ENCODE measurements at regions of chr5 and their contacts with region 1.

Region 1: GRCh38 chr5:111278845-111279504 is 54.8 kb downstream of the CAMK4 start:
- DNase-seq: peak; percentile 69
- H3K4me3 ChIP-seq: no peak overlapping the region
- H3K27ac ChIP-seq: no peak overlapping the region
- H3K4me1 ChIP-seq: no peaks in the 10 kb centered on the region
- H3K27me3 ChIP-seq: no peaks in the 10 kb centered on the region
- CTCF ChIP-seq: peak; percentile 69

Region 2: GRCh38 chr5:110536120-110537115 is 742.6 kb before region 1 on chr5:
- intact Hi-C with region 1: no loop called
- DNase-seq: no peak
- H3K4me3 ChIP-seq: no peak overlapping the region
- H3K27ac ChIP-seq: no peak overlapping the region
- H3K4me1 ChIP-seq: no peaks in the 10 kb centered on the region
- H3K27me3 ChIP-seq: no peaks in the 10 kb centered on the region
- CTCF ChIP-seq: no peak

Region 3: GRCh38 chr5:110707260-110707844 is 571.6 kb before region 1 on chr5:
- intact Hi-C with region 1: no loop called
- DNase-seq: no peak
- H3K4me3 ChIP-seq: no peak overlapping the region
- H3K27ac ChIP-seq: no peak overlapping the region
- H3K4me1 ChIP-seq: no peaks in the 10 kb centered on the region
- H3K27me3 ChIP-seq: no peaks in the 10 kb centered on the region
- CTCF ChIP-seq: no peak

Region 4: GRCh38 chr5:111158105-111158744 is 120.8 kb before region 1 on chr5:
- intact Hi-C with region 1: loop called (anchors 2 kb)
- DNase-seq: peak; percentile 77
- H3K4me3 ChIP-seq: no peak overlapping the region
- H3K27ac ChIP-seq: no peak overlapping the region
- H3K4me1 ChIP-seq: no peaks in the 10 kb centered on the region
- H3K27me3 ChIP-seq: no peaks in the 10 kb centered on the region
- CTCF ChIP-seq: peak; percentile 99

Region 5: DNA sequence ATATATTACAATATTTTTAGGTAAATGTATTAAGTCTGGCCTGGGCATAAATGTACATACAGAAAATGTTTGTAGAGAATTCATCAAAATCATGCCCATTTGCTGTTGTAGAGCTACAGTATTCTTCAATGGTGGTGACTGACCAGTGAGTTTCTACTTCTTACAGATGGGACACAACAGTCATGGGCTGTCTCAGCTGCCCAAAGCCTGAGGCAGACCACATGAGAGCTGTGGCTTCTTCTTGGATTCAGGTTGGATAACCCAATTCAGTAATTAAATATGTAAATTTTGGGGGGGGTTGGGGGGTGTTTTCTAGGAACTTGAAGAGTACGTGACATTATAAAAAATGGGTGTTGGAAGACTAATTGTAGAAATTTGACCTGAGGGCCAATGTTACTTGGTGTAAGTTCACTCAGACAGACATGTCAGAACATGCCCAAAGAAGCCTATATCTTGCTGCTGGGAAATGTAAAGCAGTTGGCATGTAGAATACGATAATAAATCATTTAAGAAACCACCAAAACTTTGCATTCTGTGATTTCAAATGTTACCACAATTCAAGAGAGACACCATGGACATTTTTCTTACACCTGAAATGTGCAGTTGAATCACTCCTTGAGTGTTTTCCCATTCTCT is 215.5 kb after region 1 on chr5:
- intact Hi-C with region 1: no loop called
- DNase-seq: no peak
- H3K4me3 ChIP-seq: no peak overlapping the region
- H3K27ac ChIP-seq: no peak overlapping the region
- H3K4me1 ChIP-seq: no peaks in the 10 kb centered on the region
- H3K27me3 ChIP-seq: no peaks in the 10 kb centered on the region
- CTCF ChIP-seq: no peak

Measured in colonic mucosa (tissue), 4 donors.